Activated CD4-positive, alpha-beta memory T cell treated with anti-CD3 and anti-CD28 coated beads for 36 hours (primary cell): ENCODE measurements at regions of chr12 and their contacts with region 1.

Region 1: DNA sequence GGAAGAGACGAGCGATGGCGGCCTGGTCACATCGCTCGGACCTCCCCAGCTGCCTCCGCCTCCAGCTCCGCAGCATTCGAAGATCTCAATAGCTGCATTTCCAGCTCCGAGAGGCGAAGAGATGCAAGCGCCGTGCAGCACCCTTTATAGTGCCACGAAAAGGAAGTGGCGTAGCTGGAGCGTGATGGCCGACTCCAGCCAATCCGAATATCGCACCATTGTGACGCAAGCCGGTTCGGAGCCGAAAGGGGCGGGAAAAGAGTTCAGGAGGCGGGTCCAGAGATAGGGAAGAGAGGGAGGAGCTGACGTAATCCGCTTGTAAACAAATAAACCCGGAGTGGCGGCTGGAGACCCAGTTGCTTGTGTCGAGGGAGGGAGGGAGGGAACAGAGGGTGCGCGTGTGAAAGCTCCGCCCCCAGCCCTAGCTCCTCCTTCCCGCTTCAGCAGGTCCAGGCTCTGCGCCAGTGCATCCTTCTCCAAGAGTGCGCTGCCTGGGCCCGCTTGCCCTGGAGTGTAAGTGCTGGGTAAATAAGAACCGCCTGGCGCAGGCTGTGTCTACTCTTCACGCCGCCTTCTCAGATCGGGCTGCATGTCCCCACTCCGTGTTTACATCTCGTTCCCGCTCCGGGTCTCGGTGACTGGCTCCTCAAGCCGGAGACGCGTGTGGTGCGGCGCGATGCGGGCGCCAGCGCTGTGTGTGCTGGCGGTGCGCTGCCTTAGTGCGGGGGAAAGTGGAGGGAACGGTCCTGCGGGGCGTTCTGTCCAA is at the start of gene BTG1:
- DNase-seq: peak; percentile 100
- H3K4me3 Mint-ChIP-seq: peak within 1 kb of the TSS; percentile 100
- H3K27ac Mint-ChIP-seq: peak within 1 kb of the TSS; percentile 91
- H3K4me1 Mint-ChIP-seq: peaks cover 20% of the 10 kb centered on the region
- H3K27me3 Mint-ChIP-seq: peaks cover 2% of the 10 kb centered on the region
- total RNA-seq, gene BTG1: 137 to 144 TPM

Region 2: GRCh38 chr12:91778938-91779400 is 366.9 kb before region 1 on chr12:
- CTCF ChIA-PET with region 1: interaction called, 5 read pairs
- POLR2A ChIA-PET with region 1: interaction called, 13 read pairs
- intact Hi-C with region 1: loop called (anchors 2 kb)
- DNase-seq: peak; percentile 65
- H3K4me3 Mint-ChIP-seq: peak overlapping the region; percentile 48
- H3K27ac Mint-ChIP-seq: peak overlapping the region; percentile 75
- H3K4me1 Mint-ChIP-seq: peaks cover 27% of the 10 kb centered on the region
- H3K27me3 Mint-ChIP-seq: peaks cover 3% of the 10 kb centered on the region

Region 3: GRCh38 chr12:92034858-92035401 is 111.0 kb before region 1 on chr12:
- CTCF ChIA-PET with region 1: no interaction called
- POLR2A ChIA-PET with region 1: interaction called, 35 read pairs
- intact Hi-C with region 1: loop called (anchors 2 kb)
- DNase-seq: peak; percentile 66
- H3K4me3 Mint-ChIP-seq: peak overlapping the region; percentile 84
- H3K27ac Mint-ChIP-seq: peak overlapping the region; percentile 78
- H3K4me1 Mint-ChIP-seq: peaks cover 83% of the 10 kb centered on the region
- H3K27me3 Mint-ChIP-seq: no peaks in the 10 kb centered on the region

Region 4: GRCh38 chr12:92208613-92209121 is 62.8 kb after region 1 on chr12:
- CTCF ChIA-PET with region 1: interaction called, 18 read pairs
- POLR2A ChIA-PET with region 1: interaction called, 75 read pairs
- intact Hi-C with region 1: loop called (anchors 1 kb)
- DNase-seq: no peak
- H3K4me3 Mint-ChIP-seq: peak overlapping the region; percentile 70
- H3K27ac Mint-ChIP-seq: peak overlapping the region; percentile 87
- H3K4me1 Mint-ChIP-seq: peaks cover 35% of the 10 kb centered on the region
- H3K27me3 Mint-ChIP-seq: no peaks in the 10 kb centered on the region

Region 5: DNA sequence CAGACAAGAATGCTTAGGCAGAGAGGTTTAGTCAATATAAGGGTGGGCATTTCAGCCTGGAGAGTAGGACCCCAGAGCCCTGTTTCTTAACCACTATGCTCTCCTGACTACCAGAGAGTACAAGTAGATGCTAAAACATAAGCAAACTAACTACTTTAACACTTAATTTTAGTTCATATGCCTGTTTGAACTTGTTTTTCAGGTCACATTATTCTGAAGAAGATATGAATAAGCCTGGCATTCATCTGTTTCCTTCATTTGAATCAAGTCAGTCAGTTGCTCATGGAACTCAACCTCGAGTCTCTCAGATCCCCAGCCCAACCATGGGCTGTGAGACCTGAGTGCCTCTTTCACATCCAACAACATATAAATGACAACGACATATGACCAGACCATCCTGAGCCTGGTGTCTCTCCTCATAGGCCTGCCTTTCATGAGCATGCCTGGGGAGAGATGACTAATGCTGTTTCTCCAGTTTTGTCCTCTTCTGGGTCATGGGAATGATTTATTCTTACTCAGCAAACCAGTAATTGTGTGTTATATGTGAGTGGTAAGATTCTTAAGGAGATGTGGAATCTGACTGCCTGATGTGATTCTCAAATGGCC is 250.8 kb after region 1 on chr12:
- CTCF ChIA-PET with region 1: interaction called, 4 read pairs
- POLR2A ChIA-PET with region 1: interaction called, 75 read pairs
- intact Hi-C with region 1: no loop called
- DNase-seq: peak; percentile 61
- H3K4me3 Mint-ChIP-seq: no peak overlapping the region
- H3K27ac Mint-ChIP-seq: peak overlapping the region; percentile 86
- H3K4me1 Mint-ChIP-seq: peaks cover 90% of the 10 kb centered on the region
- H3K27me3 Mint-ChIP-seq: no peaks in the 10 kb centered on the region

Region 6: GRCh38 chr12:92551853-92552397 is 406.0 kb after region 1 on chr12:
- CTCF ChIA-PET with region 1: interaction called, 7 read pairs
- POLR2A ChIA-PET with region 1: interaction called, 18 read pairs
- intact Hi-C with region 1: no loop called
- DNase-seq: peak; percentile 75
- H3K4me3 Mint-ChIP-seq: no peak overlapping the region
- H3K27ac Mint-ChIP-seq: no peak overlapping the region
- H3K4me1 Mint-ChIP-seq: peaks cover 25% of the 10 kb centered on the region
- H3K27me3 Mint-ChIP-seq: no peaks in the 10 kb centered on the region

Region 7: DNA sequence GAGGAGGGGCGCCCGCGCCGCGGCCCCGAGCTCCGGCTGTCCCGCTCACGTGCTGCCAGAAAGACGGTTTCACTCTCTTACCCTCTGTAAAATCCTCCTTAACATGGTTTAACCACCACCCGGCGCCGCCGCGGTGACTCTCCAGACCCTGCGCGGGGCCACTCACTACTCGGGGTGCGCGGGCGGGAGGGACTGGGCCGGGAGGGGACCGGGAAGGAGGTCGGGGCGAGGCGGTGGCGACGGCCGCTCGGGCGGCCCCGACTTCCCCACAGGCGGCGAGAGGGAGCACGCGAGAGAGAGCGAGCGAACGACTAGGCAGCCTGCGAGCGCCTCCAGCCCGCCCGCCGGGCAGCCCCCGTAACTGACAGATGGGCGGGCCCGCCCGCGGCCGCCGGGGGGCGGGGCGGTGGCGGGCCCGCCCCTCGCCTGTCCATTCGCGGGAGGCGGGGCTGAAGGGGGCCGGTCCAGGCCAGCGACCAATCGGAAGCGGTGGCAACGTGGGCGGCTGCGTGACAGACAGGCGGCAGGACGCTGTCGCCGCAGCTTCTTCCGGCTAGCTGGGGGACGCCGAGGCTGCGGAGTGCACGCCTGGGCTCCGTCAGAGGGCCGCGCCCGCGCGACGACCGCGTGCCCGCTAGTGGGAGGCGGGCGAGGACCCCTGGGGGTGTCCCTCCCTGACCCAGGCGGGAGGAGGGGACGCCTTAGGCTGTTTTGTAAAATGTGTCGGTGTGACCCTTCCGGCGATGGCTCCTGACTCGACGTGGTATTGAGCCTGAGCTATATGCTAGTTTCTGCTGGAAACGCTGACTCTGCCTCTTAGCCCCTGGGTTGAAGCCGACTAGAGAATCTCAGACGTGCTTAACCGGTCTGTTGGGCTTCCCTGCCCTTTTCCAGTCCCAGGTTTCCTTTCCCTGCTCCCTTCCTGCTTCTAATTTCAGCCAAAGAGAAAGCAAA is 783.3 kb after region 1 on chr12 and contains the start of gene EEA1:
- CTCF ChIA-PET with region 1: no interaction called
- POLR2A ChIA-PET with region 1: no interaction called
- intact Hi-C with region 1: loop called (anchors 5 kb)
- DNase-seq: peak; percentile 98
- H3K4me3 Mint-ChIP-seq: peak within 1 kb of the TSS; percentile 85
- H3K27ac Mint-ChIP-seq: peak within 1 kb of the TSS; percentile 95
- H3K4me1 Mint-ChIP-seq: peaks cover 32% of the 10 kb centered on the region
- H3K27me3 Mint-ChIP-seq: no peaks in the 10 kb centered on the region
- total RNA-seq, gene EEA1: 17.5 to 17.7 TPM

Region 8: GRCh38 chr12:93050026-93050747 is 904.3 kb after region 1 on chr12:
- CTCF ChIA-PET with region 1: no interaction called
- POLR2A ChIA-PET with region 1: no interaction called
- intact Hi-C with region 1: no loop called
- DNase-seq: no peak
- H3K4me3 Mint-ChIP-seq: no peak overlapping the region
- H3K27ac Mint-ChIP-seq: no peak overlapping the region
- H3K4me1 Mint-ChIP-seq: no peaks in the 10 kb centered on the region
- H3K27me3 Mint-ChIP-seq: peaks cover 8% of the 10 kb centered on the region